HEK293 (cell line): ENCODE measurements at regions of chr9 and their contacts with region 1.

Region 1: DNA sequence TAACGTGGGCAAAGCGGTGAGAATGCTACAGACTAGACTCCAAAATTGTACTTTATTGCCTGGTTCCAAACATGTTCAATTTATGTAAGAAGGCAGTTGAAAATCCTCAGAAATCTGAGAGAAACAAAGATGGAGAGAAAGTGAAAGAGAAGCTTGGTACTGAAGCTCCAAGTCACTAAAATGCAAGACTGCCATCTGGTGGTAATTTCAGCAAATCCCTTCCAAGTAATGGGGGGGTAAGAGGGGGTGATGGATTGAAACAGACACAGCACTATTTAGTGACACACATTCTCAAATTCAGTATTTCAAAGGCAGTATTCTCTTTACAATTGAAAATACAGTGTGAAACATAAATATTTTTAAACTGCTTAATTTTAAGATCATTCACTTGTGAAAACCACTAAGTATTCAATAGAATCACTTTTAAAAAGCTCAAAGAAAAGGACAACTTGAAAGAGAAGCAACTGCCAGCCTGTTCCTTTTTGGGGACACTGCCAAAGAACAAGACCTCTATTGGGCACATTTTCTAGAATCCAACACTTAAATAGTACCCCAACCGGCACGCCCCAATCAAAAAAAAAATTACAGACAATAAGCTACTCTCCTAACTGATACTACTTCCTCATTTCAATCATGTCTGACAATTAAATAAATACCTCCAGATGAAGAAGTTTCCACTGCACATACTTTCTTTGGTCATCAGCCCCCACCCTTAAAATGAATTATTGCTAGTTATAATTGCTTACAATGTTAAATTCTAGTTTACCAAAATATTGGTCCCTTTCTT is 131.5 kb downstream of the AGTPBP1 start:
- H3K4me3 ChIP-seq: no peak overlapping the region
- H3K27ac ChIP-seq: no peak overlapping the region
- H3K4me1 ChIP-seq: no peaks in the 10 kb centered on the region
- CTCF ChIP-seq: peak; percentile 56

Region 2: DNA sequence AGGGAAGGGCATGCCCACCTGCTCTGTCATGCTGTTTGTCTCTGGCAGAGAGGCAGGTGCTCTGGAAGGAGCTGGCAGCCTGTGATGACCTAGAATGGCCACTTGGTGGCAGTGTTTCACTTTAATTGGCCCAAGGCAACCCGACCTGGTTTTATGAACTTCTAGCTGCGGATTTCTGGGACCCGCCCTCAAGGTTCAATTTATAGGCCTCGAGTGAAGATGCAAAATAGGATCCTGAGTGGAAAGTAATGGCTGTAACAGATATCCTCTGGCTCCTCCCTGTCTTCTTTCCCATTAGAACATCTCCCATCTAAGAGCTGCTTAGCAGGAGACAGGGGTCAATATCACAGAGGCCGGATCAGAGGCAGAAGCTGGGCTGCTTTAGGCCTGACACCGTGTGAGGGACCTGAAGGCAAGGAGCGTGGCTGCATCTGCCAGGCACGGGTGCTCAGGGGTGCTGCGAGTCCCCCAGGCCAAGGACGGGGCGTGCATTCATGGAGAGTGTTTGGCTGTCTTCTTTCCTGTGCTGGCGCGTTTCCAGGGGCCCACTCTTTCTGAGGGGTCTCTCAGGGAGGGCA is 1213.0 kb before region 1 on chr9:
- CTCF ChIA-PET with region 1: interaction called, 12 read pairs
- POLR2A ChIA-PET with region 1: interaction called, 3 read pairs
- H3K4me3 ChIP-seq: no peak overlapping the region
- H3K27ac ChIP-seq: no peak overlapping the region
- H3K4me1 ChIP-seq: no peaks in the 10 kb centered on the region
- CTCF ChIP-seq: 0 out of 2 replicates have a peak, but pooled peaks have one; percentile 15

Region 3: DNA sequence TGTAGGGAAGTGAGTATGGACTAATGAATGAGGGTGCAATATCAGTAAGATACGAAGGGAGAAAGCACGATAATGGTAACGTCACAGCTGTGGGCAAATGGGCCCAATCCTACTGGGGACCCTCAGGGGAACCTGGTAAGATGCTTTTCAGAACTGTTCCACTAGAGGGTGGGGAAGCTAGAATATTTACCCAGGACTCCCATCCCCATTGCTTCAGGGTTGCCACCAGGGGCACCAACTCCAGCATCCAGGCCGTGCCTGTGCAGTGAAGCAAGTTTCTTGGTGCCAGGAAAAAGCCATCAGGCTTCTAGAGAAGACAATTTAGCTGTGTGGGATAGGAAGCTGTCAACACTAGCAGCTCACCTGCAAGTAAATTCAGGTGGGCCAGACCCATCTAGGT is 277.8 kb before region 1 on chr9:
- CTCF ChIA-PET with region 1: interaction called, 13 read pairs
- POLR2A ChIA-PET with region 1: no interaction called
- H3K4me3 ChIP-seq: no peak overlapping the region
- H3K27ac ChIP-seq: no peak overlapping the region
- H3K4me1 ChIP-seq: no peaks in the 10 kb centered on the region
- CTCF ChIP-seq: peak; percentile 71

Region 4: GRCh38 chr9:85425153-85425611 is 185.1 kb before region 1 on chr9:
- CTCF ChIA-PET with region 1: interaction called, 15 read pairs
- POLR2A ChIA-PET with region 1: no interaction called
- H3K4me3 ChIP-seq: no peak overlapping the region
- H3K27ac ChIP-seq: no peak overlapping the region
- H3K4me1 ChIP-seq: no peaks in the 10 kb centered on the region
- CTCF ChIP-seq: peak; percentile 88

Region 5: DNA sequence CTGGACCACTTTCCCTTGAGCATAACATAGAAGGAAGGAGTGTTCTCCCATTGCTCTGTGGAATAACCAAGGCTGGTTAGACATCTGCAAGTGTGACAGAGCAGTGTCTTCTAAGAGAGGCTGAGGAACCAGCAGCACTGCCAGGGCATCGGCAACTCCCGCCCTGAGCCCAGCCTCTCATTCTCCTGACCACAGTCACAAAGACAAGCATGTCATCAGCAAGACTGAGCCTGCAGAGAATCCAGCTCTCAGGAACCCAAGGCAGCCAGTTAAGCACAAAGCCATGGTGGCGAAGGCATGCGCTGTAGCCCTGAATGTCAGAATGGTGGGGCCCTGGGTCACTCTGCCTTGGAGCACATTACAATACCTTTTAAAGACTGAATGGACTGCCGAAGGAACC is 122.4 kb before region 1 on chr9:
- CTCF ChIA-PET with region 1: interaction called, 11 read pairs
- POLR2A ChIA-PET with region 1: no interaction called
- H3K4me3 ChIP-seq: no peak overlapping the region
- H3K27ac ChIP-seq: no peak overlapping the region
- H3K4me1 ChIP-seq: no peaks in the 10 kb centered on the region
- CTCF ChIP-seq: no peak

Region 6: DNA sequence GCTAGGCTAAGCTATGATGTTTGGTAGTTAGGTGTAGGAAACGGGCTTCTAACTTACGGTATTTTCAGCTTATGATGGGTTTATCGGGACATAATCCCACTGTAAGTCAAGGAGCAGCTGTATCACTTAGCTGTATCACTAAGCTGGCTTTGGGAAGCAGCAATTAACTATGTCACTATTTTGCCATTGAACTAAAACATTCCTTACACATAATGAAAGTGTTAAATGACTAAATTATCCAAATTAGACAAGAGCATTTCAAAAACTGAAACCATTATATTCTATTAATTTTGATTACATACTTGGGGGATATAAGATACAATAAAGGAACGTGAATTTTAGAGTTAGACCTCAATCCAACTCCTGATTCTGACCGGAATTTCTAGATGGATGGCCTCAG is 56.8 kb before region 1 on chr9:
- CTCF ChIA-PET with region 1: no interaction called
- POLR2A ChIA-PET with region 1: no interaction called
- H3K4me3 ChIP-seq: no peak overlapping the region
- H3K27ac ChIP-seq: no peak overlapping the region
- H3K4me1 ChIP-seq: peaks cover 2% of the 10 kb centered on the region; the same call in 1 of the 2 replicates
- CTCF ChIP-seq: no peak

Region 7: GRCh38 chr9:85594316-85594715 is 16.0 kb before region 1 on chr9:
- CTCF ChIA-PET with region 1: interaction called, 10 read pairs
- POLR2A ChIA-PET with region 1: no interaction called
- H3K4me3 ChIP-seq: no peak overlapping the region
- H3K27ac ChIP-seq: no peak overlapping the region
- H3K4me1 ChIP-seq: no peaks in the 10 kb centered on the region
- CTCF ChIP-seq: no peak

Region 8: GRCh38 chr9:85876628-85877027 is 266.4 kb after region 1 on chr9:
- CTCF ChIA-PET with region 1: no interaction called
- POLR2A ChIA-PET with region 1: no interaction called
- H3K4me3 ChIP-seq: no peak overlapping the region
- H3K27ac ChIP-seq: no peak overlapping the region
- H3K4me1 ChIP-seq: peaks cover 4% of the 10 kb centered on the region; the same call in 1 of the 2 replicates
- CTCF ChIP-seq: no peak

Region 9: DNA sequence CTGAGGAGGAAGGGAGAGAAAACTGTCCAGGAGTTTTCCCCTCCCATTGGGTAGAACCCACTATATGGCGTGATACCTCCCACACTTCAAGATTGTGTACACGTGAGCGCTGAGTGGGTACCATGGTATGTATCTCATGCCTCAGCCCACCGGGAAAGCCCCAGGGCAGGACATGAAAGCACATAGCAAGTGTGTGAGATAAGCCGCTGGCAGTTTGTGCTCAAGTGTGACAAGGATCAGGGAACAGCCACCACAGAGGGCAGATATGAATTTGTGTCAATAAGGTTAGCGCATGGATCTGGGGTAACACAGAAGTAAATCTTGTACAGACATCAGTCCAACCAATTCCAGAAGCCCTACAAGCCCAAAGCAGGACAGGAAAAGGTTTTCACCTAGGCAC is 288.1 kb after region 1 on chr9:
- CTCF ChIA-PET with region 1: no interaction called
- POLR2A ChIA-PET with region 1: no interaction called
- H3K4me3 ChIP-seq: no peak overlapping the region
- H3K27ac ChIP-seq: no peak overlapping the region
- H3K4me1 ChIP-seq: no peaks in the 10 kb centered on the region
- CTCF ChIP-seq: no peak

Region 10: DNA sequence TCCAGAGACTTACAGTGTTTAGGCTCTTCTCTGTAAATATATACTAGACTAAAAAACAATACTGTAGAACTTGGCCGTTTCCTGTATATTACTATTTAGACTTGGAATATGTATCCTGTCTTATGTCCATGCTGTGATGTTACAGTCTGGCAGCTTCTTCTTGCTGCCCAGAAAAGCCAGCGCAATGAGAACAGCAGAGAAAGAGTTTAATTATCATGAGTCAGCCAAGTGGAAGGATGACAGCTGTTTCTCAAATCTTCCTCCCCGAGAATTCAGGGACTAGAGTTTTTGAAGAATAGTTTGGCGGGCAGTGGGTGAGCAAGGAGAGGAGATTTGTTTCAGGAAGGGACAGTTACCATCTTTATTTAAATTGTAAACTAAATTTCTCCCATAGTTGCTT is 368.2 kb after region 1 on chr9:
- CTCF ChIA-PET with region 1: no interaction called
- POLR2A ChIA-PET with region 1: no interaction called
- H3K4me3 ChIP-seq: no peak overlapping the region
- H3K27ac ChIP-seq: no peak overlapping the region
- H3K4me1 ChIP-seq: no peaks in the 10 kb centered on the region
- CTCF ChIP-seq: no peak